Heart right ventricle (tissue), 16 donors: ENCODE measurements at regions of chr6 and their contacts with region 1.

Region 1: GRCh38 chr6:46491628-46492547 is 639 bp upstream of the RCAN2 start:
- DNase-seq: peak; percentile 56 to 65
- ATAC-seq: peak; percentile 84 to 94 (median 92)
- H3K4me3 ChIP-seq: peak overlapping the region; percentile 55 to 79 (median 70)
- H3K27ac ChIP-seq: peak overlapping the region; percentile 70 to 97 (median 90)
- H3K4me1 ChIP-seq: peaks cover 0 to 42% (median 11%) of the 10 kb centered on the region in 9 donors
- H3K27me3 ChIP-seq: peaks cover 0 to 73% (median 0%) of the 10 kb centered on the region in 7 donors
- CTCF ChIP-seq: peak; percentile 48 to 89 (median 74)

Region 2: GRCh38 chr6:46221222-46221793 is 270.6 kb before region 1 on chr6:
- intact Hi-C with region 1: loop called in 4 of 10 experiments (anchors 5 to 10 kb)
- DNase-seq: no peak
- ATAC-seq: peak in 7 of 8 donors; percentile 60 to 81 (median 70)
- H3K4me3 ChIP-seq: no peak overlapping the region
- H3K27ac ChIP-seq: no peak overlapping the region
- H3K4me1 ChIP-seq: peaks cover 0 to 39% (median 11%) of the 10 kb centered on the region in 9 donors
- H3K27me3 ChIP-seq: no peaks in the 10 kb centered on the region
- CTCF ChIP-seq: peak; percentile 60 to 91 (median 83)

Region 3: DNA sequence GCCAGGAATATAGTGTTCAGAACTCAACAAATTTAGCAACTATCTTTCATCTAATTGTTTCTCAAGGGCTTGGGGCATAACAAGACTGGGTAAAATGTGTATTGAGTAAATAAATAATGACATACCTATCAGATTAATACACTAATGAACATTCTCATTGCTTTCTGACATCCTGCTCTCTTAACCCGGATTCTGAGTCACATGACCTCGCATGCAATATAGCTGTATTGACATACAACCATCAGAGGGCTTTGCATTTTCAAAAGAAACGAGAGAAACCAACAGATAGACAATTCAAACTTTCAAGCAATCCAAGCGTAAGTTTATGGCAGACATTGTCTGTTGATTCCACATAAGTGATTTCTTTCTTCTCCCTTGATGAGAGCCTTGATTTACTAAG is 64.4 kb before region 1 on chr6:
- intact Hi-C with region 1: loop called in 6 of 10 experiments (anchors 1 to 5 kb)
- DNase-seq: no peak
- ATAC-seq: no peak
- H3K4me3 ChIP-seq: no peak overlapping the region
- H3K27ac ChIP-seq: peak overlapping the region in 2 of 10 donors; percentile 6 to 36
- H3K4me1 ChIP-seq: peaks cover 0 to 50% (median 15%) of the 10 kb centered on the region in 9 donors
- H3K27me3 ChIP-seq: no peaks in the 10 kb centered on the region
- CTCF ChIP-seq: no peak

Region 4: DNA sequence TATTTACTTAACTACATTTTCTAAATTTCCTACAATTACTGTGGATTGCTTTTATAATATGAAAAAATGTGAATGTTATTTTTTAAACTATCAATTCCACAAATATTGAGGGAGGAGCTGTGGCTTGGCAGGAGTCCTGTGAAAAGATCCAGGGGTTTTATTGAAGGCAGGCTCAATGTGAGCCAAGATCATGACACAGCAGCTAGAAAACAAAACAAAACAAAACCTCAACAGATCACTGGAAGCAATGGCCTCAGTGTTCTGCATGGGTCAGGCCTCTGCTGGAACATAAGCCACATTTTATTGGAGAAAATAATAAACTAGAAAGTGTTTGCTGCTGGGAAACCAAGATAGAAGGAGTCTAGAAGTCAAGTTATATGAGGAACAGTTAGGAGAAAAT is 18.8 kb after region 1 on chr6:
- intact Hi-C with region 1: loop called in 1 of 10 experiments (anchors 2 kb)
- DNase-seq: peak in 1 of 2 donors; percentile 54
- ATAC-seq: peak in 6 of 8 donors; percentile 23 to 77 (median 63)
- H3K4me3 ChIP-seq: no peak overlapping the region
- H3K27ac ChIP-seq: peak overlapping the region; percentile 48 to 85 (median 80)
- H3K4me1 ChIP-seq: peaks cover 3 to 82% (median 61%) of the 10 kb centered on the region in 9 donors
- H3K27me3 ChIP-seq: no peaks in the 10 kb centered on the region
- CTCF ChIP-seq: no peak

Region 5: DNA sequence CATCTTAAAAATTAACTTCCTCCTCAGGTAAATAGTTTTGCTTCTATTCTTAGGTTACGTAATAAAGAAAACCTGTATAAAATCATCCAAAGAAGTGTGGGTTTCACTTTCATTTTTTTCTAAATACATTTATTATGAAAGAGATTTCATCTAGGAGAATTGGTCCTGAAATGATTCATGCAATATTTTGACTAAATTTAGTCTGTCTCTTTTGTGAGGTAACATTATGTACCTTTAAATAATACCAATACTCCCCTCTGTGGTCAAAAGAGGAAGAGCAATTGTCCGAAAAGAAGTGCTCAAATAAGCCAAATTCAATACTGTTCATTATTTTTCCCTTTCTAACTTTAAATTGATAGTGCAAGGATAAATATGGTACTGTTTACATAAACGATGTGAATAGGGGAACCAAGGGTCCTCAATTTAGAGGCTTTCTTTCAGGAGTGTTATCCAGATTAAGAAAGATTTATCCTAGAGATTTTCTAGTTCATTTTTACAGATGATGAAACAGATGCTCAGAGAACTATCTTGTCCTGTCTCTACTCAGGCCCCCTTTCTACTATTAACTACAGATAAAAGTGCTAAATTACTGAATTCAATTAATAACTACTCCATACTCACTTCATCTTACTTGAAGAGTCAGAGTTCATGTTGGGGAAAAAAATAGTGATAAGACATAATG is 134.5 kb after region 1 on chr6:
- intact Hi-C with region 1: loop called in 5 of 10 experiments (anchors 5 to 10 kb)
- DNase-seq: peak in 1 of 2 donors; percentile 23
- ATAC-seq: peak in 4 of 8 donors; percentile 43 to 69 (median 56)
- H3K4me3 ChIP-seq: no peak overlapping the region
- H3K27ac ChIP-seq: peak overlapping the region in 1 of 10 donors; percentile 1
- H3K4me1 ChIP-seq: peaks cover 0 to 18% (median 8%) of the 10 kb centered on the region in 9 donors
- H3K27me3 ChIP-seq: no peaks in the 10 kb centered on the region
- CTCF ChIP-seq: peak; percentile 24 to 83 (median 65)